ENCODE measurements at regions of chr6 and their contacts with region 1.

Region 1: DNA sequence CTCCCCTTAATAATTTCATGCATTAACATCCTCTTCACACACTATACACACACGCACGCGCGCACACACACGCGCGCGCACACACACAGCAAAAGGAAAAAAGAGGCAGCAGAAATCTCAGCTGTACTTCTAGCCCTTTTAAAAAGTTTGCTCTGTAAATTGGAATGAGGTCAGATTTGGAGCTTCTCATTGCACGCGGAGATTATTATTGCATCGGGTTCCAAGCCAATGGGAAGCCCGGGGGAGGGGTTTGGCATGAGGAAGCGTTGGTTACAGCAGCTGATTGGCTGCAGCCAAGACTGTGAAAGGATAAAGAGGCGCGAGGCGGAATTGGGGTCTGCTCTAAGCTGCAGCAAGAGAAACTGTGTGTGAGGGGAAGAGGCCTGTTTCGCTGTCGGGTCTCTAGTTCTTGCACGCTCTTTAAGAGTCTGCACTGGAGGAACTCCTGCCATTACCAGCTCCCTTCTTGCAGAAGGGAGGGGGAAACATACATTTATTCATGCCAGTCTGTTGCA is at the start of gene SOX4:
- DNase-seq: peak; percentile 75 to 96
- H3K4me3 ChIP-seq: peak within 1 kb of the TSS; percentile 78
- H3K27ac ChIP-seq: peak within 1 kb of the TSS; percentile 91 to 97
- H3K4me1 ChIP-seq: peaks cover 0 to 4% of the 10 kb centered on the region in 2 donors
- H3K27me3 ChIP-seq: no peaks in the 10 kb centered on the region
- CTCF ChIP-seq: no peak
- total RNA-seq, gene SOX4: 10.4 TPM

Region 2: GRCh38 chr6:20789162-20789561 is 804.3 kb before region 1 on chr6:
- intact Hi-C with region 1: loop called (anchors 2 kb)
- DNase-seq: no peak
- H3K4me3 ChIP-seq: no peak overlapping the region
- H3K27ac ChIP-seq: no peak overlapping the region
- H3K4me1 ChIP-seq: no peaks in the 10 kb centered on the region
- H3K27me3 ChIP-seq: no peaks in the 10 kb centered on the region
- CTCF ChIP-seq: peak in 1 of 3 experiments; percentile 32

Region 3: GRCh38 chr6:21634582-21634981 is 41.1 kb after region 1 on chr6:
- intact Hi-C with region 1: loop called (anchors 2 kb)
- DNase-seq: peak in 1 of 2 donors; percentile 78
- H3K4me3 ChIP-seq: no peak overlapping the region
- H3K27ac ChIP-seq: peak overlapping the region; percentile 38 to 56
- H3K4me1 ChIP-seq: peaks cover 0 to 17% of the 10 kb centered on the region in 2 donors
- H3K27me3 ChIP-seq: no peaks in the 10 kb centered on the region
- CTCF ChIP-seq: no peak

Region 4: DNA sequence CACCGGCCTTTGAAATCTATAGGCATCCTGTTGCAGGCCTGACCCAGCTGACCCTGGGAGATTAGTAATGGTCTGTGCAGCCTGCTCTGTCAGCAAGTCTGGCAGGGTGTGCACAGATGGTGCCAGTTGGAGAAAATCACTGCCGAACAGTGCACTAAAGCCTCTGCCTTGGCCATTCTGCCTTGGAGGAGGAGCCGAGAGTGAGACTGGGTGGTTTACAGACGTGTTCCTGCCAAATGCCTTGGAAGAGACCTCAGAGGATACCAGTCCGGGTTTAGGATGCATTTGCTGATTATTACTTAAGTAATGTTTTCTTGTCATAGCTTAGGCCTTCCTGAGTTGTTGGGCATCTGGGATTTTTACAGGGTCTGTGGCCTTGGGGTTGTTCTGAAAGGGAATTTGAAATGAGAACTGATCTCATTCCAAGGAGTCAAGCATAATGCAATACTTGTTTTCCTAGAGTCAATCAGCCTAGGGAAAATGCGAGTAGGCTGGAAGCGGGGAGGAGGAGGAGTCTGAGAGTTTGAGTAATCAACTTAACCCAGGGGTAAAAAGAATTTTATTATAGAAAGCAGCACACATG is 292.2 kb after region 1 on chr6:
- intact Hi-C with region 1: loop called (anchors 5 kb)
- DNase-seq: peak; percentile 23 to 85
- H3K4me3 ChIP-seq: peak overlapping the region in 1 of 2 donors; percentile 22
- H3K27ac ChIP-seq: peak overlapping the region; percentile 66 to 75
- H3K4me1 ChIP-seq: peaks cover 8 to 27% of the 10 kb centered on the region in 2 donors
- H3K27me3 ChIP-seq: no peaks in the 10 kb centered on the region
- CTCF ChIP-seq: no peak

Region 5: DNA sequence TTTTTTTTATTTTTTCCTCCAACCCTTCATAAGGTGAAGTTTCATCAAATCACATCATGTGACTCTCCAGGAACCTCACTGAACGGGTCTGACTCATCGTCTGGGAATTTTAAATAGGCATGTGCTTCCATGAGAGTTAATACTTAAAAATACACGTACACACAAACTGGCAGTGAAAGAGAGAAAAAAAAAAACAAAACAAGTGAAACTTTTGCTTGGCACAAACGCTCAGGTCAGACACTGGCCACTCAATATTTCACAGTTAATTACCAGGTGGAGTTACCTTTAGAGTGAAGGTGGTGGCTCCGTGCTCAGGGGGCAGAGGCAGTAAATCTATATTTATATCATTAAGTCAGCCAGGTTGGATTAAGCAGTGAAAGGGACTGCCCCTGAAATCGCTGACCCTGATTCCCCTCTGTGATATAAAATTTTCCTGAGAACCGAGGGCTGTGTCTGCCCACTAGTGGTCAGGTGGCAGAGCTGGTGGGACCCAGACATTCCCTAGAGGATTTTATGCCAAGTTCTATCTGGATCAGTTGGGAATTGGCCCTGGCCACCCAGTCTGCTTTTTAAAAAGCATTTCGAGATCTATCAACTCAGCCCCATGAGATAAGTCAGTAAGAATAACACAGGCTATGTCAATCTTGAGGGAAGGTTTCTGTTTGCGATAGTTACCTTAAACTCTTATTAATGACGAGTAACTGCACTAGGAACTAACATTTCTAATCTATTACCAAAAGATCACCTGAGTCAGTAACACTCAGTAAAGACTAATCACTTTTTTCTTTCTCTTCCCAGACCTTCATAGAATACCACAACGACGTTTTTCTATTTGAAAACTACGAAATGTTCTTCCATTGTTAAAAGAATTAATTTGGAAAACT is 1235.0 kb after region 1 on chr6:
- intact Hi-C with region 1: loop called (anchors 10 kb)
- DNase-seq: peak in 1 of 2 donors; percentile 71
- H3K4me3 ChIP-seq: peak overlapping the region in 1 of 2 donors; percentile 19
- H3K27ac ChIP-seq: peak overlapping the region; percentile 73 to 87
- H3K4me1 ChIP-seq: peaks cover 0 to 18% of the 10 kb centered on the region in 2 donors
- H3K27me3 ChIP-seq: no peaks in the 10 kb centered on the region
- CTCF ChIP-seq: peak; percentile 60 to 69 (median 68)

Measured in ascending aorta (tissue), 2 donors.